ENCODE measurements at regions of chr1 and their contacts with region 1.

Region 1: GRCh38 chr1:9121496-9122409 is 7.1 kb downstream of the GPR157 start:
- DNase-seq: peak in 32 of 35 experiments; percentile 13 to 71 (median 36)
- ATAC-seq: peak; percentile 83 to 99 (median 96)
- H3K4me3 ChIP-seq: peak overlapping the region in 1 of 2 donors; percentile 47
- H3K4me3 Mint-ChIP-seq: peak overlapping the region; percentile 47 to 65 (median 62)
- H3K27ac ChIP-seq: no peak overlapping the region
- H3K27ac Mint-ChIP-seq: peak overlapping the region; percentile 13 to 16
- H3K4me1 ChIP-seq: peaks cover 11 to 15% of the 10 kb centered on the region in 2 experiments
- H3K4me1 Mint-ChIP-seq: peaks cover 28 to 36% (median 33%) of the 10 kb centered on the region in 3 donors
- H3K27me3 ChIP-seq: no peaks in the 10 kb centered on the region
- H3K27me3 Mint-ChIP-seq: no peaks in the 10 kb centered on the region

Region 2: DNA sequence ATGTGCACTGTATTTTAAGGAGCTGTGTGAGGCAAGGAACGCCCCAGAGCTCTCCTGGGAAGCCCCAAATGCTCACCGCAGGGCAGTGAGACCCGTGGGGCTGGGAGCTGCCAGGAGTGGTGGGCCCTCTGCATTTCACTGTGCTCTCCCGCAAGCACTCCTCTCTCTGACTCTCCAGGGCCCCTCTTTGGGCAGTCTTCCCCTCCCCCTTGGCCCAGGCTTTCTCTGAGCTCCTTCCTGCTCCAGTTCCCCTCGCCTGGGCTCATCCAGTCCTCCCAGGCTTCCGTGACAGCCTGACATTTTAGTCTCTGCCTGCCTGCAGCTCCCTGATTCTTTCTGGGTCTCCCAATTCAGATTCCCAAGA is 178.3 kb before region 1 on chr1:
- CTCF ChIA-PET with region 1: interaction called in 1 of 2 experiments, 12 read pairs
- POLR2A ChIA-PET with region 1: no interaction called
- DNase-seq: no peak
- ATAC-seq: peak in 1 of 4 experiments; percentile 39
- H3K4me3 ChIP-seq: no peak overlapping the region
- H3K4me3 Mint-ChIP-seq: peak overlapping the region in 1 of 3 donors; percentile 59
- H3K27ac ChIP-seq: no peak overlapping the region
- H3K27ac Mint-ChIP-seq: peak overlapping the region; percentile 55 to 70
- H3K4me1 ChIP-seq: peaks cover 41 to 86% of the 10 kb centered on the region in 2 experiments
- H3K4me1 Mint-ChIP-seq: peaks cover 81 to 95% (median 93%) of the 10 kb centered on the region in 3 donors
- H3K27me3 ChIP-seq: no peaks in the 10 kb centered on the region
- H3K27me3 Mint-ChIP-seq: no peaks in the 10 kb centered on the region

Region 3: GRCh38 chr1:9145021-9145668 is 23.4 kb after region 1 on chr1:
- CTCF ChIA-PET with region 1: no interaction called
- POLR2A ChIA-PET with region 1: no interaction called
- DNase-seq: no peak
- ATAC-seq: no peak
- H3K4me3 ChIP-seq: no peak overlapping the region
- H3K4me3 Mint-ChIP-seq: no peak overlapping the region
- H3K27ac ChIP-seq: no peak overlapping the region
- H3K27ac Mint-ChIP-seq: no peak overlapping the region
- H3K4me1 ChIP-seq: peaks cover 0 to 4% of the 10 kb centered on the region in 2 experiments
- H3K4me1 Mint-ChIP-seq: peaks cover 4 to 15% (median 4%) of the 10 kb centered on the region in 3 donors
- H3K27me3 ChIP-seq: no peaks in the 10 kb centered on the region
- H3K27me3 Mint-ChIP-seq: no peaks in the 10 kb centered on the region